Activated T-helper 1 cell treated with anti-CD3 and anti-CD28 coated beads, Interleukin-12 subunit alpha, Interleukin-12 subunit beta, Interleukin-2, Interleukin-4 antibody, amounts not matched to agents 30 ng/mL and 10 ng/mL and 1 ng/mL, durations not matched to agents 14 hours and 24 hours and 36 hours (primary cell): ENCODE measurements at regions of chr15 and their contacts with region 1.

Region 1: DNA sequence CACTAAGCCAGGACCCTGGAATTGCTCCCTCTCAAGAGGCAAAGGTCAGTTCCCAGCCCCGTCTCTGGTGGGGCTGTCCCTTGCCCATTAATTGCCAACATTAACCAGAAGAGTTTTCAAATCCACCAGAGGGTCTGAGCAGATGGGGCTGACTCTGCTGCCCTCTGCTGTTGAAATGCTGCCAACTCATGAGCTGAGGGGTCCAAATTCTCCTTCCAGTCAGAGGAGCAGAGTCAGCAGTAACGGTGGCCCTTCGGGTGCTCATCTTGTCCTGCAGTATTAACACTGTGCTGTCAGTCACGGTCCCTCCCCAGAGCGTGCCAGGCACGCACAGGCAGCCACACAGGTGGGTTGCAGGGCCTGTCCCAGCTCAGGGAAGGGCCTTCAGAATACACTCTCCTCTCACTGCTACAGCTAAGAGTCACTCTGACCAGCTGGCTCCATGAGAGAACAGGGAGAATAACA is 10.7 kb upstream of the SPTBN5 start:
- DNase-seq: peak; percentile 50
- H3K4me3 Mint-ChIP-seq: no peak overlapping the region
- H3K27ac Mint-ChIP-seq: no peak overlapping the region
- H3K4me1 Mint-ChIP-seq: peaks cover 8% of the 10 kb centered on the region
- H3K27me3 Mint-ChIP-seq: no peaks in the 10 kb centered on the region

Region 2: DNA sequence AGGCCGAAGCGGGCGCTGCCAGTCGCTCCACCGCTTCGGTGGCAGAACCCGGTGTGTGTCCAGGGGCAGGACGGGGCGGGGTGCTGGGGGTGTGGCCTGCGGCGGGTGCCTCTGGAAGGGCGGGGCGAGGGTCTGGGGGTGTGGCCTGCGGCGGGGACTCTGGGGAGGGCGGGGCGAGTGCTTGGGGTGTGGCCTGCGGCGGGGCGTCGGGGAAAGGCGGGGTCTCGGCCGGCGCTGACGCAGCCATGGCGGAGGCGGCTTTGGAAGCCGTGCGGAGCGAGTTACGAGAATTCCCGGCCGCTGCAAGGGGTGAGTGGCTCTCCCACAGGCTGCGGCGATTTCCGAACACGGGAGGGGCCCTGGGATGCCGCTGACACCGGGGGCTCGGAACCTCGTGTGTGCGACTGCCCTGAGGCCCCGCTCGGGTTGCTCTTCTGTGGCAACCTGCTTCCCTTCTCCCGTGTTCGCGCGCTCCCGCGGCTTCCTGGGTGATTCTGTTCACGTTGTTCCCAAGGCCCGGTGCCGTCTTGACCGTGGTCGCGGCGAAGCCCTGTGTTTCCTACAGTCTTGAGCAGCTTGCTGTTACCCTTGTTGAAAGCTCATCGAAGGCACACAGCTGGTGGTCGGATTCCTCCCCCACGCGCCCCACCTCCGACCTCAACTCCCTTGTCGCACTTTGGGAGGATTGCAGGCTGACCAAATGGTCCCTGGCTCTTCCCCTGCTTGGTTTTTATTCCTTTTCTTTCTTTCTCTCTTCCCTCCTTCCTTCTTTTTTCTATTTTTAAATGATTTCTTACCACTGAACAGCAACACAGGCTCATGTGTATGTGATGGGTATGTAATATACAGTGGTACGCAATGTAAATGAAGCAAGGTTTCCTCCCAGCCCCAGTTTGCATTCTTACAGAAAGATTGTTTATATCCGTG is 76.4 kb before region 1 on chr15 and contains the start of gene JMJD7:
- intact Hi-C with region 1: loop called (anchors 5 kb)
- DNase-seq: peak; percentile 88
- H3K4me3 Mint-ChIP-seq: peak within 1 kb of the TSS; percentile 86
- H3K27ac Mint-ChIP-seq: peak within 1 kb of the TSS; percentile 72
- H3K4me1 Mint-ChIP-seq: peaks cover 34% of the 10 kb centered on the region
- H3K27me3 Mint-ChIP-seq: no peaks in the 10 kb centered on the region
- total RNA-seq, gene JMJD7: 14.2 and 17.8 TPM in 2 replicates